ENCODE measurements at regions of chr18 and their contacts with region 1.

Region 1: DNA sequence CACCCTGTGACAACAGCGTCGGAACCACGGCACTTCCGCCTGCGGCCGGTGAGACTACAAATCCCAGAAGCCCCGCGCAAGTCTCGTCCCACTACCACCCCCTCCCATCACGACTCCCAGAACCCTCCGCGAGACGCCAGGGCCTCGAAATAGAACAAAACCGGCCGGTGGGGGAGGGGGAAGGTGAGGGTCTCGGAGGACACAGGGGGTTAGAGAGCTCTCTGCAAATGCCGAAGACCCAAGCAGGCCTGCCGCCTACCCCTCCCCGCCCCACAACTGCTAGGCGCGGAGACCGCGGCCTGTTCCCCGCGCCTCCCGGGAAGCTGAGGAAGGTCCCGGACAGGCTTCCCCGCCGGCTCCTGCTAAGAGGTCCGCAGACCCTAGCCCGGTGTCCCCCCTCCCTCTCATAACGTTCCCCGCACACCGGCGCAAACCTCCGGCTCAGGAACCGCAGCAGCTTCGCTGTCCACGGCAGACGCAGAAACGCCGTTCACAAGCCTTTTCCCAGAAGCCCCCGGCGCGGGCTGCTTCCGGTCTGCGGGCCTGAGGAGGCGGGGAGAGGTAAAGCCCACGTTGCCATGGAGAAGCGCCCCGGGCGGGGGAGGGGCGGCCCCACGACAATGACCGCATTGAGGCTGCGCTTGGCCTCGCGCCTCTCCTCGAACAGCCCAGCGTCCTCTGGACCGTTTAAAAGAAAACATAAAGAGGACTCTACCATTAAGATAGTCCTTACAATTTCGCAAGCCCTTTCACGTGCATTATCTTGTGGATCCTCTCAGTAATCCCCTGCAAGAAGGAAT is at the start of gene ZNF24:
- DNase-seq: peak; percentile 98 to 99
- ATAC-seq: peak; percentile 99
- H3K4me3 ChIP-seq: peak within 1 kb of the TSS; percentile 71 to 90
- H3K27ac ChIP-seq: peak within 1 kb of the TSS; percentile 80 to 95
- H3K4me1 ChIP-seq: peaks cover 0 to 3% of the 10 kb centered on the region in 2 donors
- H3K27me3 ChIP-seq: no peaks in the 10 kb centered on the region
- total RNA-seq, gene ZNF24: 44.3 to 52.5 TPM

Region 2: DNA sequence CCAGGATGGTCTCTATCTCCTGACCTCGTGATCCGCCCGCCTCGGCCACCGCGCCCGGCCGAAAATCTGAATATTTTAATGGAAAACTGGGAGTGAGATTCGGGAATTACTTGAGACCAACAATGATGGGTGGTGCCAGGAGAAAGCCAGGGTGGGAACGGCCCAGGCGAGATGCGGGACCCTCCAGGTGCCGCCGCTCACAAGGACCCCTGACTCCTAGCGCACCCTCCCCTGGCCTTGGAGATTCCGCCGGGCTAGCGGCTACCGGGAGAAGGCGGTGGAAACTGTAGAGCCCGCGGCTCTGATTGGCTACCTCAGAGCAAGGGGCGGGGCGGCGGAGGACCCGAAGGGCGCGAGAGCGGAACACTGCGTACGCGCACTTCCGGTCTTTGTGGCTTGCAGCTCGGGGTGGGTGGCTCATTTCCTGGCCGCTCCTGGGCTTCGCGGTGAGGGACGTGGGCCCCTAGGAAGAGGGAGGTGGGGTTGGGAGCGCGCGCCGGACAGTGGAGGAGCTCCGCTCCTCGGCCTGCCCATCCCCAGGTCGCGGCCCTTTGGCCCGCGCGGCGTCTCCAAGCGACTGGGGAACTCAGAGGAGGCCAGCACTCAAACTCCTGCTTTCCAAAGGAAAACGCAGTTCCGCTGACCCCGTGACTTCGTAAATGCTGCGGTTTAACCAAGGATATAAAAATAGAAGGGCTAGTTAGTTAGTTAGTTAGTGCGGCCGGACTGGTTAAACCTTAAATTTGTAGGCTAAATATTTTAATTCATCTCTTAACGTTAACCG is 103.3 kb before region 1 on chr18 and contains the start of gene ZNF397:
- intact Hi-C with region 1: loop called (anchors 2 kb)
- DNase-seq: peak; percentile 99 to 100
- ATAC-seq: peak; percentile 100
- H3K4me3 ChIP-seq: peak within 1 kb of the TSS; percentile 71 to 83
- H3K27ac ChIP-seq: peak within 1 kb of the TSS; percentile 96 to 99
- H3K4me1 ChIP-seq: no peaks in the 10 kb centered on the region
- H3K27me3 ChIP-seq: no peaks in the 10 kb centered on the region
- total RNA-seq, gene ZNF397: 32.8 to 40.4 TPM

Measured in aorta (tissue), 5 donors.